ENCODE measurements at regions of chr5 and their contacts with region 1.

Region 1: GRCh38 chr5:77867194-77867691 is 91.1 kb upstream of the TBCA start:
- H3K4me3 Mint-ChIP-seq: no peak overlapping the region
- H3K27ac Mint-ChIP-seq: no peak overlapping the region
- H3K4me1 Mint-ChIP-seq: peaks cover 27% of the 10 kb centered on the region
- H3K27me3 Mint-ChIP-seq: no peaks in the 10 kb centered on the region

Region 2: GRCh38 chr5:77645158-77645994 is 221.9 kb before region 1 on chr5:
- intact Hi-C with region 1: loop called (anchors 10 kb)
- H3K4me3 Mint-ChIP-seq: peak overlapping the region; percentile 52
- H3K27ac Mint-ChIP-seq: no peak overlapping the region
- H3K4me1 Mint-ChIP-seq: peaks cover 32% of the 10 kb centered on the region
- H3K27me3 Mint-ChIP-seq: peaks cover 96% of the 10 kb centered on the region

Region 3: GRCh38 chr5:77798456-77798855 is 68.8 kb before region 1 on chr5:
- intact Hi-C with region 1: no loop called
- H3K4me3 Mint-ChIP-seq: no peak overlapping the region
- H3K27ac Mint-ChIP-seq: no peak overlapping the region
- H3K4me1 Mint-ChIP-seq: peaks cover 23% of the 10 kb centered on the region
- H3K27me3 Mint-ChIP-seq: no peaks in the 10 kb centered on the region

Measured in dendritic cell treated with granulocyte-macrophage colony-stimulating factor and Interleukin-4, amounts not matched to agents 40 ng/mL and 50 ng/mL, for 4 days (primary cell).